ENCODE measurements at regions of chr21 and their contacts with region 1.

Region 1: DNA sequence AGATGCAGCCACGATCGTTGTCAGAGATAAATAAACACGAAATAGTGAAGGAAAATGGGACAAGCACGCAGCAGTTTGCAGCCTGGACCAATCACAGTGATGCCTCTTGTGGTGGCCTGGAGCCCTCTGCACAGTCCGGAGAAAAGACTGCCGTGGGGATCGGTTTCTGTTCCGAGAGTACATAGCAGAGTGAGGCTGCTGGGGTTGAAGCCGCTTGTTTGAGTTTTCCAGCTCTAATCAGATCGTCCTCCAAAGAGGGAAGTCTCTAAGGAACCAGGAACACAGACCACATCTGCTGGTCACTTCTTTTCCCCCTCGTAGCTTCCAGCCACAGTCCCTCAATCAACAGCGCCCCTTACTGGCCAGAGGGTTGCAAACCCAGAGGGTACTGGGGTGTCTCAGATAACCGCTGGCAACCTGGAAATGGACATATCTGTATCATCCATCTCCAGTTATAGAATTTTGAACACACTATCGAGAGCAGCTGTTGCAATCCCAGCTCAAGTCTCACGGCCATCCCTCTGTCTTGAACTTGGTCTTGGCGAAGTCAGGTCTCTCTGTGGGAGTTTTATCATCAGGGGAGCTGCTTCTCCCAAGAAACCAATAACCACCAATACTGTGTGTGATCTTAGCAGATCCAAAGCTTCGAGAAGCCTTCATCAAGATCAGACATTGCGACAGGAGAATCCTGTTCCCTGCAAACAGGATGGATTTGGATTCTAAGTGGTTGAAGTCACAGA is 57.4 kb downstream of the OLIG1 start:
- DNase-seq: peak; percentile 76
- ATAC-seq: peak; percentile 76
- H3K4me3 Mint-ChIP-seq: peak overlapping the region; percentile 53
- H3K27ac Mint-ChIP-seq: no peak overlapping the region
- H3K4me1 Mint-ChIP-seq: no peaks in the 10 kb centered on the region
- H3K27me3 Mint-ChIP-seq: peaks cover 34% of the 10 kb centered on the region

Region 2: GRCh38 chr21:32994305-32994704 is 133.0 kb before region 1 on chr21:
- CTCF ChIA-PET with region 1: interaction called, 15 read pairs
- DNase-seq: no peak
- ATAC-seq: no peak
- H3K4me3 Mint-ChIP-seq: no peak overlapping the region
- H3K27ac Mint-ChIP-seq: no peak overlapping the region
- H3K4me1 Mint-ChIP-seq: no peaks in the 10 kb centered on the region
- H3K27me3 Mint-ChIP-seq: peaks cover 51% of the 10 kb centered on the region

Region 3: DNA sequence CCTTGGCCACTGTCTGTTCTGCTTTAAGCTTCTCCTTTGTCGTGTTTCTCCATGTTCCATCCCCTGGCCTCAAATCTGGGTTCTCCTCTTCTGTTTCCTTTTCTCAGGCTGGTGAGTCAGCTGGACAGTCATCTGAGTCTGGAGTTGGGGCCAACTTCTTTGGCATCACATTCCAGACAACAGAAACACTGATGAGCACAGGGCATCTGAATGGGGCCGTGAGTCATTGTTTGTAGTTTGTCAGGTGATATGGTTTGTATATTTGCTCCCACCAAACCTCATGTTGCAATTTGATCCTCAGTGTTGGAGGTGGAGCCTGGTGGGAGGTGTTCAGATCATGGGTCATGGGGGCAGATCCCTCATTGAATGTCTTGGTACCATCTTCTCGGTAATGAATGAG is 115.9 kb before region 1 on chr21:
- CTCF ChIA-PET with region 1: no interaction called
- DNase-seq: peak; percentile 1
- ATAC-seq: no peak
- H3K4me3 Mint-ChIP-seq: no peak overlapping the region
- H3K27ac Mint-ChIP-seq: no peak overlapping the region
- H3K4me1 Mint-ChIP-seq: no peaks in the 10 kb centered on the region
- H3K27me3 Mint-ChIP-seq: peaks cover 55% of the 10 kb centered on the region